K562 (cell line): ENCODE measurements at regions of chr15 and their contacts with region 1.

Region 1: DNA sequence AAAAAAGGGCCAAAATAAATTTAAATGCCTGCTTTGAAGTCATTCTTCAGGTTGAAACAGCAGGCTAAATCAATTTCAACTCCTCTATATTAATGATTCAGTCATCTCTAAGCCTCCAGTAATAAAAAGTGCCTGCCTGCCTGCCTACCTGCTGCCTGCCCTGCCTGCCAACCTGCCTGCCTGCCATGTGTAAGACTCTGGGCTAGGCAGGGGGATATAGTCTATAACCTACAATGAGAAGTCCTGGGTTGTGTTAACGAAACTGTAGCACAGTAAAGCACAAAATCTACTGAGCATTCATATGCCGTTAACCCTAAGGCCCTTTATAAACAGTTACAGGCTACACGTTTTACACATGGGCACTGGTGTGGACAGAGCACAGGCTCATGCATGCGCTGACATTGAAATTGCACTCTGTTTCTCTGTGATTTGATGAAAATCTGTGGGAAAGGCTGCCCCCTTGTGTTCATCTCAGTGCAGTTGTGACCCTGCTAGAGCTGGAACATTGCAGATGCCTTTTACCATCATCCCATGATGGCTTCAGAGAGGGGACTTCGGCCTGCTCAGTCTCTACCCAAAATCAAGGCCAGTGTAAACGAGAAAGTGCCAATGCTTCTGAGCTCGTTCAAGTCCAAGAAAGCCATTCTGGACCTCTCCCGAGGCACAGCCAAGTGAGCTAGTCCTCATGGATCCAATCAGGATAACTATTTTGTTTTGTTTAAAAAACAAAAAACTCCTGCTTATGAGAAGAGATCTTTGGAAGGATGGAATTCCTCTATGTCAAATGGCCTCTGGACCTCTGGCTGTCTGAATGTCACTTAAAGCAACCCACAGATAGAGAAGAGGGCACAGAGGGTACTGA is 64.6 kb downstream of the EFL1 start:
- DNase-seq: peak; percentile 42 to 75 (median 54)
- ATAC-seq: peak; percentile 98
- H3K4me3 ChIP-seq: no peak overlapping the region
- H3K27ac ChIP-seq: no peak overlapping the region
- H3K4me1 ChIP-seq: no peaks in the 10 kb centered on the region
- H3K27me3 ChIP-seq: no peaks in the 10 kb centered on the region
- CTCF ChIP-seq: peak; percentile 65 to 82 (median 71)
- EP300 ChIP-seq: no peak
- POLR2A ChIP-seq: no peak
- RAD21 ChIP-seq: peak; percentile 49 to 81

Region 2: GRCh38 chr15:82108489-82109078 is 89.4 kb before region 1 on chr15:
- CTCF ChIA-PET with region 1: interaction called, 6 read pairs
- POLR2A ChIA-PET with region 1: no interaction called
- in situ Hi-C with region 1: no loop called
- intact Hi-C with region 1: loop called (anchors 1 kb)
- DNase-seq: peak; percentile 78 to 88 (median 85)
- ATAC-seq: peak; percentile 97
- H3K4me3 ChIP-seq: no peak overlapping the region
- H3K27ac ChIP-seq: no peak overlapping the region
- H3K4me1 ChIP-seq: peaks cover 5 to 15% of the 10 kb centered on the region in 2 experiments; a peak in 4 of 5 replicates
- H3K27me3 ChIP-seq: peaks cover 8 to 17% of the 10 kb centered on the region in 2 experiments; a peak in 4 of 5 replicates
- CTCF ChIP-seq: peak; percentile 86 to 98 (median 87)
- EP300 ChIP-seq: no peak
- POLR2A ChIP-seq: no peak
- RAD21 ChIP-seq: peak; percentile 79 to 92

Region 3: DNA sequence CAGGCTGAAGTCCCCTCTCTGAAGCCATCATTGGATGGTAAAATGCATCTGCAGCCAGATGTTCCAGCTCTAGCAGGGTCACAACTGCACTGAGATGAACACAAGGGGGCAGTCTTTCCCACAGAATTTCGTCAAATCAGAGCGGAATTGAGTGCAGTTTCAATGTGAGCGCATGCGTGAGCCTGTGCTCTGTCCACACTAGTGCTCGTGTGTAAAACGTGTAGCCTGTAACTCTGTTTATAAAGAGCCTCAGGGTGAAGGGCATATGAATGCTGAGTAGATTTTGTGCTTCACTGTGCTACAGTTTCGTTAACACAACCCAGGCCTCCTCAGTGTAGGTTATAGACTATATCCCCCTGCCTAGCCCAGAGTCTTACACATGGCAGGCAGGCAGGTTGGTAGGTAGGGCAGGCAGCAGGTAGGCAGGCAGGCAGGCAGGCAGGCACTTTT is 1944.9 kb after region 1 on chr15:
- CTCF ChIA-PET with region 1: no interaction called
- POLR2A ChIA-PET with region 1: no interaction called
- in situ Hi-C with region 1: loop called (anchors 5 kb)
- intact Hi-C with region 1: no loop called
- DNase-seq: peak; percentile 69 to 90 (median 74)
- ATAC-seq: peak; percentile 100
- H3K4me3 ChIP-seq: no peak overlapping the region
- H3K27ac ChIP-seq: no peak overlapping the region; the same call in 2 of the 3 replicates
- H3K4me1 ChIP-seq: no peaks in the 10 kb centered on the region; a peak in 1 of 5 replicates
- H3K27me3 ChIP-seq: no peaks in the 10 kb centered on the region
- CTCF ChIP-seq: peak; percentile 81 to 85 (median 82)
- EP300 ChIP-seq: no peak
- POLR2A ChIP-seq: no peak
- RAD21 ChIP-seq: peak; percentile 65 to 87